Activated naive CD4-positive, alpha-beta T cell treated with anti-CD3 and anti-CD28 coated beads for 36 hours (primary cell): ENCODE measurements at regions of chr6 and their contacts with region 1.

Region 1: GRCh38 chr6:136123468-136123867 is 126.6 kb downstream of the MTFR2 start:
- DNase-seq: no peak
- H3K4me3 Mint-ChIP-seq: no peak overlapping the region
- H3K27ac Mint-ChIP-seq: no peak overlapping the region
- H3K4me1 Mint-ChIP-seq: no peaks in the 10 kb centered on the region
- H3K27me3 Mint-ChIP-seq: no peaks in the 10 kb centered on the region

Region 2: DNA sequence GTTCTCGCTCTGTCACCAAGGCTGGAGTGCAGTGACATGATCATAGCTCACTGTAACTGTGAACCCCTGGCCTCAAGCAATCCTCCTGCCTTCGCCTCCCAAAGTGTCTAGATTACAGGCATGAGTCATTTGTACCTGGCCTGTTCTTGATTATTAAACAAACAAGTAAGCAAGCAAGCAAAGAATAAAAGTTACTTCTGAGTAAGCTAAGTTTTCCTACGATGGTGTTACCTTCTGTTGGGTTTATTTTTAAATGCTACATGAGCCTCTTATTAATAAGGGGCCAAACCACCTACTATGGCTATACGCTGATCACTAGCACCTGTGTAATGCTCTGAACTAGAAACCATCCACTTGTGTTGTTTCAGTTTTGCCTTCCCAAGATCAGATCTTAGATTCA is 999.1 kb after region 1 on chr6:
- CTCF ChIA-PET with region 1: interaction called, 11 read pairs
- intact Hi-C with region 1: no loop called
- DNase-seq: no peak
- H3K4me3 Mint-ChIP-seq: no peak overlapping the region
- H3K27ac Mint-ChIP-seq: no peak overlapping the region
- H3K4me1 Mint-ChIP-seq: no peaks in the 10 kb centered on the region
- H3K27me3 Mint-ChIP-seq: peaks cover 2% of the 10 kb centered on the region